ENCODE measurements at regions of chr19 and their contacts with region 1.

Region 1: DNA sequence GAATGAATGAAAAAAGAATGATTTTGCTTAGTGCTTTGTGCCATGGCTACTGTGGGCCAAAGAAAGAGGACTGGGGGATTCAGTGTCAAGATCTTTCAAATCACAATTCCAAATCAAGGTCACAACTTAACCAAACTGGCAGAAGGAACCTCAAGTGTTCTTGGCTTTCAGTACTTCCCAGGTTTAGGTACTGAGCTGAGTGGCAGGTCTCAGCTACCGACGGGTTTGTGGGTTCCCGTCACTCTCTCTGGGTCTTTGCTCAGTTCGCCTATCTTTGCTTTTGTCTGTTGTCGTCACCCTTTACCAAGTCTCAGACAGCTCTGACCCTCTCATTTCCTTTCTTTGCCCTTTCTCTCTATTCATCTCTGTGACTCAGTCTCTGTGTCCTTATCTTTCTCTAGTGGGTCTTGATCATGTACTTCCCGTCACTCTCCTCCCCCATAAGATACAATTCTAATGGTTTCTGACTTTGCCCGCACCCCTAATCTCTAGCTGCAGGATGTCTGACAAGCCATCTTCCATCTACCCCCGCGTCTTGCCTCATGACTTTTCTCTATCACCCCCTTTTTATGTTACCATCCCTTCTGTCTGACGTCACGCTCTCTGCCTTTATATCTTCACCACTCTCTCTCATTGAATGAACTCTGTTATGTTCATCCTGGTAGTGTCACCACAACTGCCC is 33.3 kb upstream of the LRRC4B start:
- DNase-seq: no peak
- H3K4me3 ChIP-seq: no peak overlapping the region
- H3K27ac ChIP-seq: no peak overlapping the region
- H3K4me1 ChIP-seq: no peaks in the 10 kb centered on the region
- H3K27me3 ChIP-seq: no peaks in the 10 kb centered on the region
- CTCF ChIP-seq: no peak

Region 2: DNA sequence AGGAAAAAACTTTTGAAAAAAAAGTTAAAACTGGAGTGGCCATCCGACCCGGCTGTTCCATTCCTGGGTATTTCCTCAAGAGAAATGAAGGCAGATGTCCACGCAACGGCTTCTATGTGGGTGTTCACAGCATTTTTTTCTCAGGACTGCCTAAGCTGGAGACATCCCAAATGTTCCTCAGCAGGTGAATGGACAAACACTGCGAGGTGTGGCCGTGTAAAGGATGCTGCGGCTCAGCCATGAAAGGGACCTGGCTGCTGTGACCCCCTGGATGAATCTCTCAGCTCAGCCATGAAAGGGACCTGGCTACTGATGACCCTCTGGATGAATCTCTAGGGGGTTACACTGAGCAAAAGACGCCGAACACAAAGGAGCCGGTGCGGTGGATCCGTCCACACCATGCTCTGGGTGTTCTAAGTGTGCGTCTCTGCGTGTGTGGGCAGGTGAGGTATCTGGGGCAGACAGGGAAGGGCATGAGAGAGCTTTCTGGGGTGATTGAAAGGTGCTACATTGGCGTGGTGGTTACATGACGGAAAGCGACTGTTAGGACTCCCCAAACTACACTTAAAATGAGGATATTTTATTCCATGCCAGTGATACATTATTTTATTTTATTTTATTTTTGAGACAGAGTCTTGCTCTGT is 80.6 kb before region 1 on chr19:
- CTCF ChIA-PET with region 1: no interaction called
- dilution Hi-C with region 1: loop called (anchors 5 kb)
- in situ Hi-C with region 1: no loop called
- intact Hi-C with region 1: no loop called
- DNase-seq: no peak
- H3K4me3 ChIP-seq: no peak overlapping the region
- H3K27ac ChIP-seq: no peak overlapping the region
- H3K4me1 ChIP-seq: no peaks in the 10 kb centered on the region
- H3K27me3 ChIP-seq: no peaks in the 10 kb centered on the region
- CTCF ChIP-seq: no peak

Region 3: GRCh38 chr19:50943074-50943828 is 341.7 kb after region 1 on chr19:
- CTCF ChIA-PET with region 1: no interaction called
- dilution Hi-C with region 1: no loop called
- in situ Hi-C with region 1: no loop called
- intact Hi-C with region 1: no loop called
- DNase-seq: peak; percentile 47
- H3K4me3 ChIP-seq: no peak overlapping the region
- H3K27ac ChIP-seq: peak overlapping the region; percentile 56
- H3K4me1 ChIP-seq: peaks cover 14% of the 10 kb centered on the region
- H3K27me3 ChIP-seq: no peaks in the 10 kb centered on the region
- CTCF ChIP-seq: no peak